B cell (primary cell): ENCODE measurements at regions of chr13 and their contacts with region 1.

Region 1: GRCh38 chr13:32538621-32539246 is at the start of gene N4BP2L2:
- DNase-seq: peak; percentile 96
- ATAC-seq: peak; percentile 96
- H3K4me3 ChIP-seq: peak within 1 kb of the TSS; percentile 72 to 98 (median 86)
- H3K4me3 Mint-ChIP-seq: peak within 1 kb of the TSS; percentile 98
- H3K27ac ChIP-seq: peak within 1 kb of the TSS; percentile 98
- H3K27ac Mint-ChIP-seq: peak within 1 kb of the TSS; percentile 99
- H3K4me1 ChIP-seq: peaks cover 20 to 38% of the 10 kb centered on the region in 2 donors
- H3K4me1 Mint-ChIP-seq: peaks cover 44% of the 10 kb centered on the region
- H3K27me3 ChIP-seq: no peaks in the 10 kb centered on the region
- H3K27me3 Mint-ChIP-seq: no peaks in the 10 kb centered on the region
- CTCF ChIP-seq: no peak
- total RNA-seq, gene N4BP2L2: 239 and 259 TPM in 2 replicates

Region 2: DNA sequence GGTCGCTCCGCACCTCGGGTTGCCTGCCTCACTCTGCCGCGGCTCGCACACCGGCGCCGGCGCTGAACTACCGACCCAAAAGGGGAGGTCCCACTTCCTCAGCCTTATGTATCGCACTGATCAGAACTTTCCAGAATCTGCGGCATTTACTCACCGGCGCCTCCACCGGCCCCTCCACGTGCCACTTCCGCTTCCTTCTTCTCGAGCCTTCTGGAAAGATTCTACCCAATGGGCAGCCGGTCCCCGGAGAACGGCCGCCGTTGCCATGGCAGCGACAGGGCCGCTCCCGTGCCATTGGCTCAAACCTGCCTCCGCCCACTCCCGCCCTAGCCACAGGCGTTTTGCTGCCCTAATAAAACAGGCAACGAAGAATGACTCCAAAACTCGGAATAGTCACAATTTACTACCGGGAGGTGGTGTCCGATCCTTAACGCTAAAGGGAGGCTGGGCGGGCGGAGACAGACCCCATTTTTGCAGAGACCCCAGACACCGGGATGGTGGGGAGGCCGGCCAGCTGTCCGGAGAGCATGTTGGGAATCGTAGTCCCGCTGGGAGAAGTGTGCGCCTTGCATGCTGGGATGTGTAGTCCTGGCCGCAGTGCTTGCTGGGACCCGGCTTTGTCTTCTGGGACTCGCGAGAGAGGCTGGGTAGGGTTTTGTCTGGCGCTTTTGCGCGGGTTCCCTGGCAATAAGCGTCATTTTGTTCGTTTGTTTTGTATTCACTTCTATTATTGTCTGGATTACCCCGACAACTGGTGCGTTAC is 1376.7 kb before region 1 on chr13 and contains the start of gene HSPH1:
- CTCF ChIA-PET with region 1: no interaction called
- POLR2A ChIA-PET with region 1: no interaction called
- intact Hi-C with region 1: loop called (anchors 2 kb)
- DNase-seq: peak; percentile 100
- ATAC-seq: peak; percentile 83
- H3K4me3 ChIP-seq: peak within 1 kb of the TSS; percentile 82 to 93 (median 88)
- H3K4me3 Mint-ChIP-seq: peak within 1 kb of the TSS; percentile 96
- H3K27ac ChIP-seq: peak within 1 kb of the TSS; percentile 94 to 96
- H3K27ac Mint-ChIP-seq: peak within 1 kb of the TSS; percentile 99
- H3K4me1 ChIP-seq: peaks cover 22% of the 10 kb centered on the region in 2 donors
- H3K4me1 Mint-ChIP-seq: peaks cover 34% of the 10 kb centered on the region
- H3K27me3 ChIP-seq: no peaks in the 10 kb centered on the region
- H3K27me3 Mint-ChIP-seq: no peaks in the 10 kb centered on the region
- CTCF ChIP-seq: no peak
- total RNA-seq, gene HSPH1: 52.9 and 56.4 TPM in 2 replicates

Region 3: DNA sequence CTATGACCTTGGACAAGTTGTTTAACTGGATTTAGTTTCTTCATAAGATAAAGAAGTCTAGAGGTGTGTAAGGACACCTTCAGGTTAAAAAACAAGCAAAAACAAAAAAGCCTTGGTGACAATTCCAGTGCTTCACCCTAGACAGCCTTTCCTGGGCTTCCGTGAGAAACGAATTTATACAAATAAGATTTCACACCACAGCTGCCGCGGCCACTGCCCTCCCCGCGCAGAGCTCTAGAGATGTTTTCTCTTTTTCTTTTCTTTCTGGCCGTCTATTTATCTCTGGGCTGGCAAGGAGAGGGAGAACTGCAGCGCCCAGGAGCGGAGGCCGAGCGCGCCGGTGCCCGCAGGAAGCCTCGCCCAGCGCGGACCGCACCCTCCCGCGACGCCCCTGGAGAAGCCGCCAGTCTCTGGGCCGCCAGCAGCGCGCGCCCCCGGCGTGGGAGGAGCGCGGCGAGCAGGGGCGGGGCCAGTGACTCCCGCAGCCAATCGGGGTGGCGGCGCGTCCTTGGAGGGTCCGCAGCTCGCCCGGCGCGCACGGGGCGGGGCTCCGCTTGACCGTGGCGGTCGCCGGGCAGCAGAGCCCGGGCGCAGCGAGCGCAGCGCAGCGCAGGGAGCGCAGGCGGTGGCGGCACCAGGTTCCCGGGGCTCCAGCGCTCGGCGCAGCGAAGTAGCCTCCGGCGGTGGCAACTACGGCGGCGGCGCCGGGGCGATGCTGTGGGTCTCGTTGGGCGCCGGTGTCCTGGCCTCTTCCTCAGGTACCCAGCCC is 692.4 kb before region 1 on chr13:
- CTCF ChIA-PET with region 1: no interaction called
- POLR2A ChIA-PET with region 1: no interaction called
- intact Hi-C with region 1: loop called (anchors 10 kb)
- DNase-seq: peak; percentile 76
- ATAC-seq: peak; percentile 98
- H3K4me3 ChIP-seq: peak overlapping the region; percentile 11 to 60 (median 48)
- H3K4me3 Mint-ChIP-seq: peak overlapping the region; percentile 91
- H3K27ac ChIP-seq: no peak overlapping the region
- H3K27ac Mint-ChIP-seq: peak overlapping the region; percentile 10
- H3K4me1 ChIP-seq: peaks cover 8 to 11% of the 10 kb centered on the region in 2 donors
- H3K4me1 Mint-ChIP-seq: peaks cover 19% of the 10 kb centered on the region
- H3K27me3 ChIP-seq: peaks cover 0 to 12% (median 11%) of the 10 kb centered on the region in 4 experiments
- H3K27me3 Mint-ChIP-seq: peaks cover 50% of the 10 kb centered on the region
- CTCF ChIP-seq: no peak

Region 4: DNA sequence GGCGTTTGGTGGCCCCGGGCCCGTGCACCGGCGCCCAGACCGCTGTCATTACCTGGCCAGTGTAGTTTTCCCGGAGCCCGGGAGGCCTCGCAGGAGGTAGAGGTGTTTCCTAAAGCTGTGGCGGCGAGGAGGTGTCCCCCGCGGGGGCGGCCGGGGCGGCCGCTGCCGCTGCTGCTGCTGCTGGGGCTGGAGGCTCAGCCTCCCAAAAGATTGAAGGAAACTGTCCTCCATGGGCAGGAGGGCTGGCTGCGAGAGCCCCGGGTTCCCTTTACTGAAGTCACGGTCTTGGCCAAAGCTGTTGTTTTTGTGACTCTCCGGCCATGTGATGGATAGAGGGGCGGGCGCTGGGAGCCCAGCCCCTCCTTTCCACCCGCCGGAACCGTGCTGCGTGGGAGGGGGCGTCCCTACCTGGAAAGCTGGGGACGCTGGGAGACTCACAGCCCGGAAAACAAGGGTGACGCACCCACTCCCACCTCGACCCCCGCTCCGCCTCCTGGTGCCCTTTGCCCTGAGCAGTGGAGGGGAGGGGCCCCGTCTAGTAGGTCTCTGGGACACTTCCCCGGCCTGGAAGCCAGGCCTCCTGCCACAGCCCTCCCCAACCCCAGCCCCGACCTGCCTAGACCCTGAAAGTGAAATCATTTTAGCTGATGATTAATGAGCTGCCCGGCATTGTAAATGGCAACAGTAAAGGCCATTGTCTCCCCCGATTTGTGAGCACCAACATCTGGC is 110.7 kb before region 1 on chr13 and contains the start of gene N4BP2L1:
- CTCF ChIA-PET with region 1: interaction called, 4 read pairs
- POLR2A ChIA-PET with region 1: interaction called, 25 read pairs
- intact Hi-C with region 1: loop called (anchors 1 kb)
- DNase-seq: peak; percentile 93
- ATAC-seq: peak; percentile 74
- H3K4me3 ChIP-seq: peak within 1 kb of the TSS; percentile 73 to 93 (median 80)
- H3K4me3 Mint-ChIP-seq: peak within 1 kb of the TSS; percentile 88
- H3K27ac ChIP-seq: peak within 1 kb of the TSS; percentile 95 to 98
- H3K27ac Mint-ChIP-seq: peak within 1 kb of the TSS; percentile 96
- H3K4me1 ChIP-seq: peaks cover 28 to 47% of the 10 kb centered on the region in 2 donors
- H3K4me1 Mint-ChIP-seq: peaks cover 48% of the 10 kb centered on the region
- H3K27me3 ChIP-seq: no peaks in the 10 kb centered on the region
- H3K27me3 Mint-ChIP-seq: no peaks in the 10 kb centered on the region
- CTCF ChIP-seq: no peak
- total RNA-seq, gene N4BP2L1: 52.8 and 59.0 TPM in 2 replicates

Region 5: GRCh38 chr13:32553720-32554119 is 15.0 kb after region 1 on chr13:
- CTCF ChIA-PET with region 1: no interaction called
- POLR2A ChIA-PET with region 1: no interaction called
- intact Hi-C with region 1: no loop called
- DNase-seq: no peak
- ATAC-seq: no peak
- H3K4me3 ChIP-seq: no peak overlapping the region
- H3K4me3 Mint-ChIP-seq: no peak overlapping the region
- H3K27ac ChIP-seq: no peak overlapping the region
- H3K27ac Mint-ChIP-seq: no peak overlapping the region
- H3K4me1 ChIP-seq: no peaks in the 10 kb centered on the region
- H3K4me1 Mint-ChIP-seq: peaks cover 2% of the 10 kb centered on the region
- H3K27me3 ChIP-seq: no peaks in the 10 kb centered on the region
- H3K27me3 Mint-ChIP-seq: peaks cover 4% of the 10 kb centered on the region
- CTCF ChIP-seq: no peak

Region 6: GRCh38 chr13:32639502-32640105 is 100.9 kb after region 1 on chr13:
- CTCF ChIA-PET with region 1: interaction called, 3 read pairs
- POLR2A ChIA-PET with region 1: no interaction called
- intact Hi-C with region 1: loop called (anchors 5 kb)
- DNase-seq: peak; percentile 72
- ATAC-seq: peak; percentile 80
- H3K4me3 ChIP-seq: no peak overlapping the region
- H3K4me3 Mint-ChIP-seq: no peak overlapping the region
- H3K27ac ChIP-seq: no peak overlapping the region
- H3K27ac Mint-ChIP-seq: no peak overlapping the region
- H3K4me1 ChIP-seq: peaks cover 0 to 11% of the 10 kb centered on the region in 2 donors
- H3K4me1 Mint-ChIP-seq: peaks cover 33% of the 10 kb centered on the region
- H3K27me3 ChIP-seq: no peaks in the 10 kb centered on the region
- H3K27me3 Mint-ChIP-seq: no peaks in the 10 kb centered on the region
- CTCF ChIP-seq: peak; percentile 93

Region 7: DNA sequence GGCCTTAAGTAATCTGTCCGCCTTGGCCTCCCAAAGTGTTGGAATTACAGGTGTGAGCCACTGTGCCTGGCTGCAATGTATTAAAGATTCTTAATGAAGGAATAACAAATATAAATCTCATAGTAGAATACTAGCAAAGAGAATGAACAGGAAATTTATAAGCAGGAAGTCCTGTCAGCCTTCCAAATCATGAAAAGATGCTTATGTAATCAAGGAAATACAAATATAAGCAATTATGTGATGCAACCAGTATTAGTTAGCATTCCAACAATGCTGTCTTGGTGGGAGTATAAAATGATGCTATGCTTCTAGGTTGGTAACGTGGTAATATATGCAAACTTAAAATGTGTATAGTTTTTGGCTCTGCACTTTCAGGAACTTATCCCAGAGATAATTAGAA is 181.3 kb after region 1 on chr13:
- CTCF ChIA-PET with region 1: no interaction called
- POLR2A ChIA-PET with region 1: no interaction called
- intact Hi-C with region 1: no loop called
- DNase-seq: no peak
- ATAC-seq: no peak
- H3K4me3 ChIP-seq: no peak overlapping the region
- H3K4me3 Mint-ChIP-seq: no peak overlapping the region
- H3K27ac ChIP-seq: no peak overlapping the region
- H3K27ac Mint-ChIP-seq: no peak overlapping the region
- H3K4me1 ChIP-seq: no peaks in the 10 kb centered on the region
- H3K4me1 Mint-ChIP-seq: no peaks in the 10 kb centered on the region
- H3K27me3 ChIP-seq: no peaks in the 10 kb centered on the region
- H3K27me3 Mint-ChIP-seq: no peaks in the 10 kb centered on the region
- CTCF ChIP-seq: no peak

Region 8: DNA sequence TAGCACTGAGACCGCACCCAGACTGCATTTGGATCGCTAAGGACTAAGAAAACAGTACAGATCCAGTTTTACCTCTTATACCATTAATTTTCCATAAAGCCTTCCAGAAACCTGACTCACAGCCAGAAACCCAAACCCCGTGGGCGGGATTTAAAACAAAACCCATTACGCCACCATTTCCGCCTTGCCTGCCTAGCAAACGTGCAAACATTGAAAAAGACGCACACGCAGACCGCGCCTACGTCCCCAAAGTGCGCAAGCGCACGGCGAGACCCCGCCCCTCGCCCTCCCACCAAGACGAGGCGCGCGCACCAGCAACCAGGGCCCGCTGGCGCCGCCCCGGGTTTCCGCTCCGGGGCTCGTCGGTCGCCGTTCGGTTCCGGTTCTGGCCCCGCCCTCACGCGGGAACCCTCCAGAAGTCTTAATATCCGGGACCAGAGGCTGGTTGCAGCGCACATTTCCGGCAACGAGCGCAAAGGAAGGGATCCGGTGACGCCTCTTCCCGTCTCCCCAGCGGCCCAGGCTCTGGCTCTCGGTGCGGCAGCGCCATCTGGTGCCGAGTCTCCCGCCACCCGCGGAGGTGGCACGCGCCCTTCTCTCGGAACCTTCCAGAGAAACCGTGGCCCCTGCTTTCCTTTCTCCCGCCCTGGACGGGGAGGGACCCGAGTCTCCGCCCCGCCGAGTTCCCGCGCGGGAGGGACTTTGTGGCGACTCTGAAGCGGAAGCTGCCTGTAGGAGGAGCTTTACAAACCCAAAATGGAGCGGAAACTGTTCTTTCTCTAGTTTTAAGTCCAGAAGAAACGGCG is 1003.8 kb after region 1 on chr13:
- CTCF ChIA-PET with region 1: interaction called, 6 read pairs
- POLR2A ChIA-PET with region 1: no interaction called
- intact Hi-C with region 1: loop called (anchors 1 kb)
- DNase-seq: peak; percentile 100
- ATAC-seq: peak; percentile 83
- H3K4me3 ChIP-seq: peak overlapping the region; percentile 57 to 98 (median 84)
- H3K4me3 Mint-ChIP-seq: peak overlapping the region; percentile 96
- H3K27ac ChIP-seq: peak overlapping the region; percentile 95 to 100
- H3K27ac Mint-ChIP-seq: peak overlapping the region; percentile 100
- H3K4me1 ChIP-seq: peaks cover 19 to 26% of the 10 kb centered on the region in 2 donors
- H3K4me1 Mint-ChIP-seq: peaks cover 39% of the 10 kb centered on the region
- H3K27me3 ChIP-seq: no peaks in the 10 kb centered on the region
- H3K27me3 Mint-ChIP-seq: no peaks in the 10 kb centered on the region
- CTCF ChIP-seq: peak; percentile 79